ENCODE measurements at regions of chr1 and their contacts with region 1.

Region 1: GRCh38 chr1:116168277-116169097 is 57.3 kb downstream of the MAB21L3 start:
- DNase-seq: no peak
- H3K4me3 ChIP-seq: peak overlapping the region; percentile 55
- CTCF ChIP-seq: peak; percentile 82

Region 2: DNA sequence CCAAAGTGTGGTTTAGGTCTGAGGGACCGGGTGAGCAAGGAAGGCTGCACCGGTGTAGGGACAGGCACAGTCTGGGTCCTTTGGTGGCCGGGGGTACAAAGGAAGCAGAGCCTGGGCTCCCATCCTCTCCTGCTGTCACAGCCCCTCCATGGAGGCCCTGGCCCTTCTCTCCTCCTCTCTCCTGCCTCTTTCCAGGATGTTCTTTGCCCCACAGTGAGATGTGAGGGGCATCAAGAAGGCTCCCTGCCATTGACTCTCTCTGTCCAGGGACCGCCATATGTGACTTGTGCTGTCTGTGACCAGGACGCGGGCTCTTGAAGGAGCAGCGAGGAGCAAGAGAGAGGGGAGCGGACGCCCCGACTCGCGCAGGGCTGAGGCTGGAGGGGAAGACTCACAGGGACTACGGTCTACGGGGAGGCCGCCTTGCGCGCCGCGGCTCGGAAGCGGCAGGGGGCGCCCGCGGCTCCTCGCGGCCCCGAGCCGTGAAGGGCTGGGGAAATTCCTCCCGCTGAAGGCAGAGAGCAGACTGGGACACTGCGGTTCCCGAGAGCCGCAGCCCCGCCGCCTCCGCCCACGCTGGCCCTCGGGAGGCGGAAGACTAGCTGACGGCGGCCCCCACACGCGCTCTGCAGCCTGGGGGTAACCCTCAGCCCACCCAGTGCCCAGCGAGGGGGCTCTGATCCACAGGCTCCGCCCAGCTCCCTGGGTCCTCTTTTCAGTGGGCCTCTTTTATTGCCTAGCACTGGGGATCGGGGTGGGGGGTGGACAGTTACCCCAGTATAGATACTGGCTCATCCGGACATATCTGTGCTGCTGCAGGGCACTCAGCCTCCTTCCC is 16.5 kb before region 1 on chr1:
- CTCF ChIA-PET with region 1: interaction called, 14 read pairs
- POLR2A ChIA-PET with region 1: no interaction called
- DNase-seq: no peak
- H3K4me3 ChIP-seq: peak overlapping the region; percentile 57
- CTCF ChIP-seq: peak; percentile 84

Region 3: DNA sequence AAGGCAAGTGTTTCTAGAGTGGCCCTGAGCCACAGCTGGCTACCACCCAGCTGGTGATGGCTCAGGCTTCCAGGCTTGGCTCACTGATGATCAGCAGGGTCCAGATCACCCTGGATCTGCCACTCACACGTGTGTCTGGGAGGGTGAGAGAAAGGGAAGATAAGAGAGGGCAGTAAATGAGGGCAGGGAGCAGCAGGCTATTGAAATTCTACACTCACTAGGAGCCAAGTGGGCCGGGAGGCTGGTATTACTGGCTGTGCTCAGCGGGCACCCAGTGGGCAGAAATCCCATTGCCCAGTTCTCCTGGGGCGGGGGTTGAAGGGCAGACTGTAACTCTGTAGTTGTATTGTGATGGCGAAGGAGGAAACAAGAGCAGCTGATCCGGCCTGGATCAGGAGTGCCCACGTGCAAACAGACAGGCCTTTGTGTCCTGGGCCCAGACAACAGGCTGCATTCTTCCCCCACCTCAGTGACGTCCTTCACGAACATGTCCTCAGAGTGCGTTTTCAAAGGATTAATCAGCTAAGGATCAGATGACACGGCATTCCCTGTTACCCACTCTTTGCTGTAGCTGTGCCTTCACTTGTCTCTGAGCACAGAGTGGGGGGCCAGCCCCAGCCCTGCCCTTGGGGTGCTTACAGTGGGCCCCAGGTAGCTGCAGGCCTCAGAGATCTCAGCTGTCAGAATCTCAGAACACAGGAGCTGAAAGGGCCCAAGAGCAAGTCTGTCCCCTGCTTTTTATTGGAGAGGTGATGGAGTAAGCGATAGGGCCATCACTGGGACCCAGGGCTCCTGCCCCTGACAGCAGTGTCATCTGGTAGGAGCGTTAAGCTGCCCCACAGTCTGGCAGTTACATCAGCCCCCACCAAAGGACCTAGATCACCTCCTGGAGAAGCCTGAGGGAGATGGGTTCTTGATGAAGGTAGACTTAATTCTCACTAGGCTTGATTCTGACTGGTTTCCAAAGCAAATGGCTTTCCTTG is 265.1 kb after region 1 on chr1:
- CTCF ChIA-PET with region 1: no interaction called
- POLR2A ChIA-PET with region 1: no interaction called
- DNase-seq: no peak
- H3K4me3 ChIP-seq: no peak overlapping the region
- CTCF ChIP-seq: no peak

Measured in AG04449 (cell line).